GM12878 (cell line): ENCODE measurements at regions of chr6 and their contacts with region 1.

Region 1: DNA sequence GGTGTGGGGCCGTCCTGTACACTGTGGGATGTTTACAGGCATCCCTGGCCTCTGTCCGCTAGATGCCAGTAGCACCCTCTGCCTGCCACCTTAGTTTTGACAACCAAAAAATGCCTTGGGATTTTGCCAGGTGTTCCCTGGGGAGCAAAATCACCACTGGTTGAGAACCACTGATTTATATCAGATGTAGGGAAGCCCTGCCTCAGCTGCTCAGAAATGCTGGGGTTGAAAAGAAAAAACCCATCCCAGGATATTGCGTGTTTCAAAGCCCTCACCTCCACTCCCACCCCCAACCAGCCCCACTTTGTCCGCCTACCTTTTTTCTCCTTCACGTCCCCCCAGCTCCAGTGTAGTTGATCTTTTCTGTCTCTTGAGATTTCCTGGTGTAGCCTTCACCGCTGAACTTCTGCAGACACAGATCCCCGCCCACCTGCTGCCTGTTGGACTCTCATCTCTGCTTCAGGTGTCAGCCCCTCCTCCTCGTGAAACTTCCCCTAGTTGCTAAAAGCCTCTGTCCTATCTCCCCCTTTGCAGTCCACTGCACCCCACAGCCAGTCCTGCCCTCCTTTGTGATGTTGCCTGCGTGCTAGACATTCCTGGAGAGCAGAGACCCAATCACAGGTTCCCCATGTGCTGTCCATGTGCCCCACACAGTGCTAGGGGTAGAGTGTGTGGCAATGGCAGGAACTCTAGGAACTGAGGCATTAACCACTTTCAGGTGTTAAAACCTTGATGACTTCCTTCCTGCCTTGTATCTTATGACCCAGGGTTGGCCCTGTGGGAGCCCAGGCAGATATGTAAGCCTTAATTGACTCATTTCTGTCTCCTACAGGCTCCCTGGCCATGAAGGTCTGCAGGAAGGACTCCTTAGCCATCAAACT is 98.9 kb downstream of the TBC1D7 start:
- DNase-seq: peak; percentile 88
- ATAC-seq: peak; percentile 94
- H3K4me3 ChIP-seq: peak overlapping the region; percentile 57
- H3K27ac ChIP-seq: peak overlapping the region; percentile 38
- H3K4me1 ChIP-seq: peaks cover 27% of the 10 kb centered on the region
- H3K27me3 ChIP-seq: no peaks in the 10 kb centered on the region
- CTCF ChIP-seq: peak; percentile 52 to 87 (median 79)
- EP300 ChIP-seq: peak; percentile 60 to 71; a peak in 3 of 4 replicates
- POLR2A ChIP-seq: peak; percentile 21; the same call in 1 of the 2 replicates
- RAD21 ChIP-seq: peak; percentile 85

Region 2: DNA sequence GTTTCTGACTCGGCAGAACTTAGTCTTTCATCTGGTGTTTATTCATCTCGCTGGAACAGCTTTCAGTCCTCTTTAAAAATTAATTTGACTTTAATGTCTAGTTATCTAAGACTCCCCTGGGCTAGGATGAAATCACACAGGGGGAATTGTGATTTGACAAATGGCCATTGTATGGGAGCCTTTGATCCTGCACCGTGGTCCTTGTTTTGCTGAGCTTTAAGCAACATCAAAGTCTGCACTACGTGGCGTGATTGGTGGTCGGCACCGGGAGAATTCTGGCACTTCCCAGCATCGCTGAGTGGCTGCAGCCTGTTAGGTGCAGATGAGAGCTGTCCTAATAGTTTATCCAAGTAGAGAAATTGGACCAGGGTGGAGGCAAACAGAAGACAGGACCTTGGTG is 48.1 kb before region 1 on chr6:
- CTCF ChIA-PET with region 1: no interaction called
- POLR2A ChIA-PET with region 1: no interaction called
- RAD21 ChIA-PET with region 1: no interaction called
- SMC1A ChIA-PET with region 1: no interaction called
- in situ Hi-C with region 1: no loop called
- intact Hi-C with region 1: no loop called
- DNase-seq: no peak
- ATAC-seq: no peak
- H3K4me3 ChIP-seq: no peak overlapping the region
- H3K27ac ChIP-seq: no peak overlapping the region
- H3K4me1 ChIP-seq: no peaks in the 10 kb centered on the region
- H3K27me3 ChIP-seq: peaks cover 2 to 3% of the 10 kb centered on the region in 2 experiments; a peak in 2 of 4 replicates
- CTCF ChIP-seq: no peak
- EP300 ChIP-seq: no peak
- POLR2A ChIP-seq: no peak
- RAD21 ChIP-seq: no peak

Region 3: DNA sequence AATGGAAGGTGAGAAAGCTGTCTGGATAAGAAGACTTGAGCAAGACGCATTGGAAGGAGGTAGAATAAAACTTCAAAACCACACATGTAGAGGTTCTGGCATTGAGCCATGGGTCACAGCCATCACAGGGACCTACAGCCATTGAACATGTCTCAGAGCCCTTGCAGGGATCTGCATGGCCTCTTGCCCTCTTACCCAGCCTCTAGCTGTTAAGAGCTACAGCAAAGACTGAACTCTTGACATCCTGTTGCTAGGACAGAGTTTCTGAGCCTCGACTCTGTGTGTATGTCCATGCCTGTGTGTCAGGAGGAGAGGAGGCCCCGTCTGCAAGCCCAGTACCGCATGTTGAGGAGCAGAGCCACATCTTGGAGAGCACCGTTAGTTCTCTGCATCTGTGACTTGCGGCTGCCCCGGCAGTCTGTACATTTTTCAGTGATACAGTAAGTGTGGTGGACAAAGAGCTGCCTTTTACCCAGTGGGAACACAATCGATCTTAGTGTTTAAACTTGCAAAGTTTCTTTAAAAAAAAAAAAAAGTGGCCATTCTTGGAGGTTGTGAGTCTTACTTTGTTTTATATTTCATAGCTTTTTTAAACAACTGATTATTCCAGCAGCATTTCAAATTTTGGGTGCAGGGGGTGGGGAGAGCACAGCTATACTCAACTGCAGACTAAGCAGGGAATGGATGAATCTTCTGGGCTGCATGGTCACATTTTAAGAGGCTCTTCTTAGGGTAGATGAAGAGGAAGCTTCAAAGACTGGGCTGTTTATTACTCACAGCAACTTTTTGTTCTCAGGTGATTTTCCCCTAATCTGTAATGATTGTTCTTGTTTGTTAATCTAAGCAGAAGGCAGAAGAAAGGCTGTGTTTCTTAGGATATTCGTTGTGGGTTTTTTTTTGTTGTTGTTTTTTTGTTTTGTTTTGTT is 10.3 kb after region 1 on chr6:
- CTCF ChIA-PET with region 1: interaction called, 12 read pairs
- POLR2A ChIA-PET with region 1: interaction called, 9 read pairs
- RAD21 ChIA-PET with region 1: interaction called, 3 read pairs
- SMC1A ChIA-PET with region 1: interaction called, 10 read pairs
- in situ Hi-C with region 1: no loop called
- intact Hi-C with region 1: no loop called
- DNase-seq: no peak
- ATAC-seq: peak; percentile 35
- H3K4me3 ChIP-seq: no peak overlapping the region
- H3K27ac ChIP-seq: no peak overlapping the region
- H3K4me1 ChIP-seq: no peaks in the 10 kb centered on the region
- H3K27me3 ChIP-seq: no peaks in the 10 kb centered on the region
- CTCF ChIP-seq: no peak
- EP300 ChIP-seq: no peak
- POLR2A ChIP-seq: no peak
- RAD21 ChIP-seq: no peak

Region 4: DNA sequence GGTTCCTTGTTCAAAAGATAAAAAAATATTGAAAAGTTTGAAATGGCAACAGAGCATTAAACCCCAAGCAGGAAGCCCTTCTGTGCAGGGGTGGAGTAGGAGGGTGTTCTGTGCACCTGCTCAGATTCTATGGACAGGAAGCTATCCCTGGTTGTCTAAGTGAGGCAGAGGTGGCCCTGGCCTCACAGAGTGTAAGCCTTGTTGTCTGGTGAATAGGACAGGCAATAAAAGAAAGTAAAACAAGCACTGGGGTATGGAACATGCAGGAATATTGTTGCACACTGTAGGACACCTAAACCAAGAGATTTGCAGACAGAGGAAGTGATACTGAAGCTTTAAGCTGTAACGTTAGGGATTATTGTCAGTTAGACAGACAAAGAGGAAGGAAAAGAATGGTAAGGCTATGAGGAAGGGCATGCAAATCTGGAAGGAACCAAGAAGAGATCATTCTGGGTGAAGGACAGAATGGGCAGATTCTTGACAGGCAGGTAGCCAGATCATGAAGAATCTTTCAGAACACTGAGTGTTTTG is 32.1 kb after region 1 on chr6:
- CTCF ChIA-PET with region 1: interaction called, 29 read pairs
- POLR2A ChIA-PET with region 1: interaction called, 17 read pairs
- RAD21 ChIA-PET with region 1: interaction called, 43 read pairs
- SMC1A ChIA-PET with region 1: interaction called, 38 read pairs
- in situ Hi-C with region 1: no loop called
- intact Hi-C with region 1: loop called (anchors 2 kb)
- DNase-seq: peak; percentile 80
- ATAC-seq: peak; percentile 57
- H3K4me3 ChIP-seq: peak overlapping the region; percentile 52; the same call in 1 of the 2 replicates
- H3K27ac ChIP-seq: peak overlapping the region; percentile 50
- H3K4me1 ChIP-seq: peaks cover 59% of the 10 kb centered on the region
- H3K27me3 ChIP-seq: no peaks in the 10 kb centered on the region
- CTCF ChIP-seq: no peak
- EP300 ChIP-seq: peak in 1 of 2 experiments; percentile 63; a peak in 1 of 4 replicates
- POLR2A ChIP-seq: peak; percentile 7; the same call in 1 of the 2 replicates
- RAD21 ChIP-seq: no peak; the same call in 1 of the 2 replicates

Region 5: GRCh38 chr6:13277836-13278563 is 48.6 kb after region 1 on chr6:
- CTCF ChIA-PET with region 1: interaction called, 108 read pairs
- POLR2A ChIA-PET with region 1: interaction called, 11 read pairs
- RAD21 ChIA-PET with region 1: interaction called, 31 read pairs
- SMC1A ChIA-PET with region 1: interaction called, 49 read pairs
- in situ Hi-C with region 1: no loop called
- intact Hi-C with region 1: loop called (anchors 1 kb)
- DNase-seq: no peak
- ATAC-seq: peak; percentile 53
- H3K4me3 ChIP-seq: no peak overlapping the region
- H3K27ac ChIP-seq: no peak overlapping the region
- H3K4me1 ChIP-seq: peaks cover 33% of the 10 kb centered on the region
- H3K27me3 ChIP-seq: no peaks in the 10 kb centered on the region; a peak in 1 of 4 replicates
- CTCF ChIP-seq: peak; percentile 57 to 69 (median 58)
- EP300 ChIP-seq: no peak
- POLR2A ChIP-seq: no peak
- RAD21 ChIP-seq: peak; percentile 58

Region 6: DNA sequence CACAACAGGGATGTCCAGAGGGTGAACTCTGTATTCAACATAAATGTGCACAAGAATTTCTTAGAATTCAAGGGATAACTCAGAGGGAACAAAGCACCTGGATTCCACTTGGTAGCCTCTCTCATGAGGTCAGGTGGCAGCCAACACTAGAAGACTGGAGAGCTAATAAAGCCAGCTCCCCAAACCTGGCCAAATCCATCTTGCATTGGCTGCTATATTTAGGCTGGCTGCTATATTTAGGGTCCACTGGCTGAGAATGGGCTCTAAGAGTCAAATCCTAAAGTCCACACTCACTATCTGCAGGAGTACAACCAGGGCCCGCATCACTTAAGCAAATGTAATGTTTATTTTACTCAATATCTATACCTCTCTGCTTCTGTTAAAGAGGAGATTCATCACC is 78.9 kb after region 1 on chr6:
- CTCF ChIA-PET with region 1: interaction called, 20 read pairs
- POLR2A ChIA-PET with region 1: interaction called, 13 read pairs
- RAD21 ChIA-PET with region 1: interaction called, 24 read pairs
- SMC1A ChIA-PET with region 1: interaction called, 46 read pairs
- in situ Hi-C with region 1: no loop called
- intact Hi-C with region 1: loop called (anchors 1 kb)
- DNase-seq: no peak
- ATAC-seq: no peak
- H3K4me3 ChIP-seq: no peak overlapping the region
- H3K27ac ChIP-seq: no peak overlapping the region
- H3K4me1 ChIP-seq: peaks cover 20% of the 10 kb centered on the region
- H3K27me3 ChIP-seq: no peaks in the 10 kb centered on the region
- CTCF ChIP-seq: no peak
- EP300 ChIP-seq: no peak
- POLR2A ChIP-seq: no peak
- RAD21 ChIP-seq: no peak